Activated CD8-positive, alpha-beta T cell treated with anti-CD3 and anti-CD28 coated beads, Interleukin-2, amount 10 ng/mL, durations not matched to agents 7 days and 5 days (primary cell): ENCODE measurements at regions of chr19 and their contacts with region 1.

Region 1: GRCh38 chr19:49937750-49938381 is 8.6 kb upstream of the NUP62 start:
- DNase-seq: peak; percentile 83
- ATAC-seq: peak; percentile 71
- H3K4me3 Mint-ChIP-seq: no peak overlapping the region
- H3K27ac Mint-ChIP-seq: no peak overlapping the region
- H3K4me1 Mint-ChIP-seq: peaks cover 28% of the 10 kb centered on the region
- H3K27me3 Mint-ChIP-seq: peaks cover 8% of the 10 kb centered on the region

Region 2: GRCh38 chr19:49766007-49766937 is 171.6 kb before region 1 on chr19:
- CTCF ChIA-PET with region 1: no interaction called
- POLR2A ChIA-PET with region 1: no interaction called
- DNase-seq: peak; percentile 100
- ATAC-seq: peak; percentile 94
- H3K4me3 Mint-ChIP-seq: peak overlapping the region; percentile 96
- H3K27ac Mint-ChIP-seq: peak overlapping the region; percentile 95
- H3K4me1 Mint-ChIP-seq: peaks cover 40% of the 10 kb centered on the region
- H3K27me3 Mint-ChIP-seq: no peaks in the 10 kb centered on the region

Region 3: DNA sequence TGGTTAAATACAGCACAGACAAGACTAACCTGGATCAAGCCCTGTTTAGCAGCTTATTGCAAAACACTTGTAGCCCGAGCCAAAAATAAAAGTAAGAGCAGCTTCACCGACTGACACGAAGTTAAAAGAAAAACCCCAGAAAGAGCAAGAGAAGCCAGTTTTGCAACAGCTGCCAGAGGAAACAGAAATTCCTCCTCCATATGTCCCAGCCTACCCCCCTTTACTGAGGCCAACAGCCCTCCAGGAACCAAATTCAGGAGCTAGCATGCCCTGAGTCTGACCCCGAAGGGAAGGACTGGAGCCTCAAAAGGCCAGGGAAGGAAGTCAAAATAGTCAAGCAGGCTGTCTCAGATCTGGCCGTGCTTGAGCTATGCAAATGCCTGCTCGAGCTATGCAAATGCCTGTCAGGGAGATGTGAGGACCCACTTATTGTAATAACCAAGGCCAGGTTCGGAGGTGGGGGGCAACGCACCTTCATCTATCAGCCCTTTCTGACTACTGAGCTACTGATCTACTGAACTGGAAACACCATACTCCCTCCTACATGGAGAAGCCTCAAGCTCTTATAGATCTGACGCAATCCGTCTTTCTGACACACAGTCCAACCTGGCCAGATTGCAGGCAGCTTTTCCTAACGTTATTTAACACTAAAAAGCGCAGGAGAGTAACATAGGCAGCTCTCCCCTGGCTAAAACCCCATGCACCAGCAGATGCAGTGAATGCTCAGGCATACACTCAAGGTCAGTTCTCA is 16.4 kb after region 1 on chr19:
- CTCF ChIA-PET with region 1: interaction called, 14 read pairs
- POLR2A ChIA-PET with region 1: no interaction called
- DNase-seq: no peak
- ATAC-seq: no peak
- H3K4me3 Mint-ChIP-seq: no peak overlapping the region
- H3K27ac Mint-ChIP-seq: no peak overlapping the region
- H3K4me1 Mint-ChIP-seq: peaks cover 16% of the 10 kb centered on the region
- H3K27me3 Mint-ChIP-seq: peaks cover 10% of the 10 kb centered on the region

Region 4: DNA sequence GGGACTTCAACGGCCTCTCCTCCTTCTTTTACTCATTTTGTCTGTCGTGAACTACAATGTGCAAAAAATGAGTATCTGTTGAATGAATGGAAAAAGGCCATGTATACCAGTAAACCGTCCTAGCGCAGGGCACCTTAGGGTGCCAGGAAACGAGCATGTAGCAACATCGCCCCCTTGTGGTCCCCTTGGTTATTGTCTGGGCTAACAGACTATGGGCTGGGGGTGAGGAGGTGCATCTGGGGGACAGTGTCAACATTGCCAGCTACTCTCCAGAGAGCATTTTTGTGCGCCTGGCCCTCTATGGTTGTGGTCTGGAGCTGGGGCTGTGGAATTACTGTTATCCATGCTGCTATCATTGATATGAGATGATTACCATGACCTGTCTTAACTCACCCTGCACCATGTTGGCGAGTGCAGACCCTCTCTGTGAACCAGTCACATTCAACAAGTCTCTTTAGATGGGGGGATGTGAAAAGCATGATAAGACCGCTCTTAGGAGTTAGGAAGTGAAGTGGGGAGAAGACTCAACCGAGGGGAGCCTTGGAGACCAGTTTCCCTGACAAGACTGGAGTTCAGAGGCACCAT is 45.9 kb after region 1 on chr19:
- CTCF ChIA-PET with region 1: interaction called, 40 read pairs
- POLR2A ChIA-PET with region 1: no interaction called
- DNase-seq: peak; percentile 83
- ATAC-seq: peak; percentile 63
- H3K4me3 Mint-ChIP-seq: no peak overlapping the region
- H3K27ac Mint-ChIP-seq: no peak overlapping the region
- H3K4me1 Mint-ChIP-seq: no peaks in the 10 kb centered on the region
- H3K27me3 Mint-ChIP-seq: no peaks in the 10 kb centered on the region